ENCODE measurements at regions of chr2 and their contacts with region 1.

Region 1: DNA sequence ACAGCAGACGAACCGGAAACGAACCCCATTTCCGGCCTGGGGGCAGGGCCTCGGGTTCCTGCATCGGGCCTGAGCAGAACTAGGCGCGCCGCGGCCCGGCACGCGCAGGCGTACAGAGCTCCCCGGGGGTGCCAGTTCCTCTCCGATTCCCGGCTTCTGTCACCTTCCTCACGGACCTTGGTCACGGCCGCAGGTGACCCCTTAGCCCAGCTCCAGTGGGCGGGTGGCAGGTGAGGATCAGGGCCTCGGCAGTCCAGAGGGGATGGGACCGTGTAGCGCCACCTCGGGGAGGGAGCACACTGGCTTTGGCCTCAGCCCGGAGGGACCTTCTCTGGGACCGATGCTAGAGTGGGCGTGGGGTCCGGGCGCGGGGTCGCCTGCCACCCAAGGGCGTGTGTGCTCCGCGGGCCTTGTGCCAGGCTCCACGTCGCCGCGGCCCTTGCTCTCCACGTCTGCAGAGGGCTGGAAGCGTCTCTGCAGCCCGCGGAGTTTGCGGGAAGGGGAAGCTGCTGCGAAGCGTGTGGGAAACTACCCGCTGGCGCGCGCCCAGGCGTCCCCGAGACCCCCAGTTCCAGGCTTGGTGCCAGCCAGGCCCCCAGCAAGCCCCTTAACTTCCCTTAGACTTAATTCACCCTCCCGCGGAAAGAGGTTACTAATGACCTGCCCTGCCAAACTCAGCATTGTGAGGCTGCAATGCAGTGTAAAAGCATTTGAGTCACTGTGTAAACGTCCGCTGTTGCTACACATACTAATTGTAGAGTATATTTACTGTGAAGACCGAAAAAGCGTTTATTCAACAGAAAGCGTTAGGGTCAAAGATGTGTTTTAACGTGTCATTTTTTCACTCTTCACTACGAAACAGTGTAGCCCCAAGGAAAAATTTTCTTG is at the start of gene TRAPPC12:
- DNase-seq: peak; percentile 89
- ATAC-seq: peak; percentile 71
- H3K4me3 ChIP-seq: peak within 1 kb of the TSS; percentile 92
- H3K27ac ChIP-seq: peak within 1 kb of the TSS; percentile 89
- H3K4me1 ChIP-seq: peaks cover 26% of the 10 kb centered on the region
- H3K27me3 ChIP-seq: no peaks in the 10 kb centered on the region
- CTCF ChIP-seq: peak; percentile 54
- total RNA-seq, gene TRAPPC12: 86.2 and 111 TPM in 2 replicates

Region 2: DNA sequence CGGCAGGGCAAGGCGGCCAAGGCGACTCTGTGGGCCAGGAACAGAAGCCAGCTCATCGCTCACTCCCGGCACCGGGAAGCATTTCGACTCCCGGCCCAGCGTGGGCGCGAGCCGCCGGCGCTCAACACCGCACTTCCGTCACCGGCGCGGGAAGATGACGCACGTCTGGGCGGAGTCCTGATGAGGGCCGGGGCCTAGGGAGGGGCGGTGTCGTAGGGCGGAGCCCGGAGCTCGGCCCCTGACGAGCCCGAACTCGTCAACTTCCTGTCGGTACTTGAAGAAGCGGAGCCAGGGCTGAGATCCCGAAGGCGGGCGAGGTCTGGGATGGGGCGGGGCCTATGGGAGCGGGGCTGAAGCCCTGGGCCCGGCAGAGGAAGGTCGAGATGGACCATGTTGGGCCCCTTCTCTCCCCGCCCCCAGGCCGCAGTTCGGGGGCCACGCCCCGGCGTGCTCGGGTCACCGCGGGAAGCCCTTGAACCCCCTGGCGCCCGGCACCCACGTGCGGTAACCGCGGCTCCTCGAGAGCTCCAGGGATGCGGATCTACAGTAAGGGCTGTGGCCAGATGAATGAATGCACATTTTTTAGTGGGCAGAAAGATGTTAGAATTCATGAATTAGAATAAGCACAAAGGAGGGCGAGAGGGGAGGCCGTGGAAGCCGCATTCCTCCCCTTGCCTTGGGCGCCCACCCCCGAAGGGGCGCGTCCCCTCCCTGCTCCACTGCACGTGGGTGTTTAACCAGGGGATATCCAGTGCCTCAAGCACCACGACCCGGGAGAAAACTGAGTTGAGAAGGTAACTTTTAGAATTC is 178.5 kb after region 1 on chr2 and contains the start of gene RNASEH1:
- CTCF ChIA-PET with region 1: no interaction called
- POLR2A ChIA-PET with region 1: no interaction called
- intact Hi-C with region 1: loop called (anchors 1 kb)
- DNase-seq: peak; percentile 99
- ATAC-seq: peak; percentile 99
- H3K4me3 ChIP-seq: peak within 1 kb of the TSS; percentile 73
- H3K27ac ChIP-seq: peak within 1 kb of the TSS; percentile 63
- H3K4me1 ChIP-seq: peaks cover 17% of the 10 kb centered on the region
- H3K27me3 ChIP-seq: no peaks in the 10 kb centered on the region
- CTCF ChIP-seq: no peak
- total RNA-seq, gene RNASEH1: 44.5 and 51.1 TPM in 2 replicates

Measured in PC-3 (cell line).